ENCODE measurements at regions of chr11 and their contacts with region 1.

Region 1: DNA sequence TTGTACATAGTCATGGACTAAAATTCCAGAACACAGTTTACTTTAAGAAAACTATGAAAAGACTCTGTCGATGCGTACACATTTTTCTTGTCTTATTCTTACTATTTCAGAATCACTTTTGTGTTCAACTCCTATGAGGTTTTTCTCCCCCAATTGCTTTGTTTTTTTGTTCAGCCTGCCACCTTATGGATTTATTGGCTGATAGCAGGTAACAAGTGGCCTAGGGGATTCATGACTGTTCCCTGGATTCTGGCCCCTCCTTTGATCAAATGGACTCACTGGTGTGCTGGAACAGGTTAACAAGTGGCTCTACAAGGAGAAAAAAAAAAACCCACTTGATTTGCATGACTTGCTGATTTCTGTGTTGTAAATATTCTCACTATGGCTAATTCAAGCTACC is 10.6 kb downstream of the MMP20 start:
- DNase-seq: no peak
- ATAC-seq: no peak
- H3K4me3 ChIP-seq: no peak overlapping the region
- H3K4me3 Mint-ChIP-seq: no peak overlapping the region
- H3K27ac ChIP-seq: no peak overlapping the region
- H3K27ac Mint-ChIP-seq: no peak overlapping the region
- H3K4me1 ChIP-seq: peaks cover 17 to 26% of the 10 kb centered on the region in 2 donors
- H3K4me1 Mint-ChIP-seq: peaks cover 26% of the 10 kb centered on the region
- H3K27me3 ChIP-seq: no peaks in the 10 kb centered on the region
- H3K27me3 Mint-ChIP-seq: no peaks in the 10 kb centered on the region
- CTCF ChIP-seq: no peak

Region 2: DNA sequence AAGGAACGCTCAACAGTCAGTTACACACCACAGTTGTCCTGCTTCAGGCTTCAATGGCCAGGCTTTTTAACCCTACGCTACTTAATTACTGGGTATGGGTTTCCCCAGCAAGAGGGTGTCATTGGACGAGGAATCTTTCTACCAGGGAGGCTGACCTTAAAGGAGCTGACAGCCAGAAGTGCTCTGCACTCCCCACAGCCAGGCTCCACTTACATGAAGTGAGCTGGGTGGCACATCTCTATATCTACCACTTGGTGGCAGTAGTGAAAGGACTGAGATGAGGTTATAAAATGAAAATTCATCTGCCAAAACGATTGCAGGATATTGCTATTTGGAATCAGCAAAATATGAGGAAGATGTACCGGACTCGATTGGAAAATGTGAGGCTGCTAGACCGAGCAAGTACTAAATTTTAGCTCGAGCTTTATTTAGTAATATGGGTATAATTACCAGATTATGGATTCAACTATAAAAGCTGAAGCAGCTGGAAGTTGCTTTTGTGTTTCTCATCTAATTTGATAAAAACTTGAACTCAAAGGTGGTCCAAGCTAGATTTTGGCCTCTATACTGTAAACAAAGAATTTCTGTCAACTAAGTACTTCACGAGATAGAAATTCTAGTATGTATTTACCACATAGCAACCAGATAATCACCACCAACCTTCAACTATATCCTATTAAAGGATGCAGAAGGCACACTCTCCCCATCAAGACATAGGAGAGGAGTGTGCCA is 753.6 kb before region 1 on chr11:
- CTCF ChIA-PET with region 1: interaction called, 14 read pairs
- POLR2A ChIA-PET with region 1: no interaction called
- intact Hi-C with region 1: loop called (anchors 2 kb)
- DNase-seq: peak; percentile 52
- ATAC-seq: peak; percentile 70
- H3K4me3 ChIP-seq: no peak overlapping the region
- H3K4me3 Mint-ChIP-seq: no peak overlapping the region
- H3K27ac ChIP-seq: no peak overlapping the region
- H3K27ac Mint-ChIP-seq: no peak overlapping the region
- H3K4me1 ChIP-seq: no peaks in the 10 kb centered on the region
- H3K4me1 Mint-ChIP-seq: no peaks in the 10 kb centered on the region
- H3K27me3 ChIP-seq: peaks cover 0 to 9% (median 1%) of the 10 kb centered on the region in 4 experiments
- H3K27me3 Mint-ChIP-seq: peaks cover 21% of the 10 kb centered on the region
- CTCF ChIP-seq: peak; percentile 88

Region 3: GRCh38 chr11:102293873-102294601 is 320.4 kb before region 1 on chr11:
- CTCF ChIA-PET with region 1: interaction called, 79 read pairs
- POLR2A ChIA-PET with region 1: no interaction called
- intact Hi-C with region 1: no loop called
- DNase-seq: peak; percentile 84
- ATAC-seq: peak; percentile 88
- H3K4me3 ChIP-seq: peak overlapping the region in 4 of 5 experiments; percentile 9 to 48 (median 29)
- H3K4me3 Mint-ChIP-seq: peak overlapping the region; percentile 98
- H3K27ac ChIP-seq: peak overlapping the region; percentile 45 to 73
- H3K27ac Mint-ChIP-seq: peak overlapping the region; percentile 99
- H3K4me1 ChIP-seq: peaks cover 33 to 41% of the 10 kb centered on the region in 2 donors
- H3K4me1 Mint-ChIP-seq: peaks cover 77% of the 10 kb centered on the region
- H3K27me3 ChIP-seq: no peaks in the 10 kb centered on the region
- H3K27me3 Mint-ChIP-seq: no peaks in the 10 kb centered on the region
- CTCF ChIP-seq: peak; percentile 83

Region 4: GRCh38 chr11:102367364-102367763 is 247.1 kb before region 1 on chr11:
- CTCF ChIA-PET with region 1: interaction called, 57 read pairs
- POLR2A ChIA-PET with region 1: no interaction called
- intact Hi-C with region 1: loop called (anchors 1 kb)
- DNase-seq: peak; percentile 47
- ATAC-seq: no peak
- H3K4me3 ChIP-seq: no peak overlapping the region
- H3K4me3 Mint-ChIP-seq: no peak overlapping the region
- H3K27ac ChIP-seq: peak overlapping the region in 1 of 2 donors; percentile 48
- H3K27ac Mint-ChIP-seq: peak overlapping the region; percentile 1
- H3K4me1 ChIP-seq: no peaks in the 10 kb centered on the region
- H3K4me1 Mint-ChIP-seq: peaks cover 16% of the 10 kb centered on the region
- H3K27me3 ChIP-seq: no peaks in the 10 kb centered on the region
- H3K27me3 Mint-ChIP-seq: no peaks in the 10 kb centered on the region
- CTCF ChIP-seq: peak; percentile 61

Region 5: GRCh38 chr11:102518296-102519094 is 96.0 kb before region 1 on chr11:
- CTCF ChIA-PET with region 1: interaction called, 12 read pairs
- POLR2A ChIA-PET with region 1: no interaction called
- intact Hi-C with region 1: no loop called
- DNase-seq: no peak
- ATAC-seq: no peak
- H3K4me3 ChIP-seq: no peak overlapping the region
- H3K4me3 Mint-ChIP-seq: no peak overlapping the region
- H3K27ac ChIP-seq: no peak overlapping the region
- H3K27ac Mint-ChIP-seq: no peak overlapping the region
- H3K4me1 ChIP-seq: peaks cover 7 to 9% of the 10 kb centered on the region in 2 donors
- H3K4me1 Mint-ChIP-seq: peaks cover 17% of the 10 kb centered on the region
- H3K27me3 ChIP-seq: no peaks in the 10 kb centered on the region
- H3K27me3 Mint-ChIP-seq: no peaks in the 10 kb centered on the region
- CTCF ChIP-seq: no peak

Region 6: GRCh38 chr11:102603091-102603490 is 11.4 kb before region 1 on chr11:
- CTCF ChIA-PET with region 1: interaction called, 10 read pairs
- POLR2A ChIA-PET with region 1: interaction called, 7 read pairs
- intact Hi-C with region 1: no loop called
- DNase-seq: no peak
- ATAC-seq: no peak
- H3K4me3 ChIP-seq: no peak overlapping the region
- H3K4me3 Mint-ChIP-seq: no peak overlapping the region
- H3K27ac ChIP-seq: no peak overlapping the region
- H3K27ac Mint-ChIP-seq: no peak overlapping the region
- H3K4me1 ChIP-seq: no peaks in the 10 kb centered on the region
- H3K4me1 Mint-ChIP-seq: peaks cover 14% of the 10 kb centered on the region
- H3K27me3 ChIP-seq: no peaks in the 10 kb centered on the region
- H3K27me3 Mint-ChIP-seq: no peaks in the 10 kb centered on the region
- CTCF ChIP-seq: no peak